Right ventricle myocardium inferior (tissue), 1 donor: ENCODE measurements at regions of chr21 and their contacts with region 1.

Region 1: GRCh38 chr21:37711836-37712568 is 204.3 kb downstream of the KCNJ6 start:
- DNase-seq: peak; percentile 84
- ATAC-seq: peak; percentile 80

Region 2: GRCh38 chr21:37758982-37759381 is 47.0 kb after region 1 on chr21:
- intact Hi-C with region 1: loop called (anchors 2 kb)
- DNase-seq: no peak
- ATAC-seq: no peak

Region 3: GRCh38 chr21:37916310-37917051 is 204.5 kb after region 1 on chr21 and contains the start of gene KCNJ6:
- intact Hi-C with region 1: loop called (anchors 2 kb)
- DNase-seq: peak; percentile 76
- ATAC-seq: peak; percentile 50
- total RNA-seq, gene KCNJ6: not detected

Region 4: GRCh38 chr21:38126669-38127303 is 414.8 kb after region 1 on chr21:
- intact Hi-C with region 1: loop called (anchors 5 kb)
- DNase-seq: peak; percentile 72
- ATAC-seq: peak; percentile 63